ENCODE measurements at regions of chr7 and their contacts with region 1.

Region 1: DNA sequence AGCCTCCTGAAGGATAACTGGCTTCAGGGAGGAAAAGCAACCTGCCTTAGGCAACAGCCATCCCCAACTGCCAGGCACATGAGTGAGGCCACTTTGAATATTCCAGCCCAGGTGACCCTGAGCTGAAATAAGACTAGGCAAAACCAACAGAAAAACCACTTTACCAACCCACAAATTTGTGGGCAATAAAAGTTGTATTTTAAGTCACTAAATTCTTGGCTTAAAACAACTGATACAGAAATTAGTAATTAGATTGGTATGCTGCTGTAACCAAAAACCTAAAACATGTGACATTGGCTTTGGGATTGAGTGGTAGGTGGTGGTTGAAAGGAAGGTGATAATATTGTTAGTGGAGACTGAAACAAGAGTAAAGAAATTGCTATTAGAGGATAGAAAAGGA is 39.9 kb downstream of the ABCB4 start:
- DNase-seq: peak; percentile 13
- ATAC-seq: no peak
- H3K4me3 ChIP-seq: no peak overlapping the region
- H3K27ac ChIP-seq: no peak overlapping the region
- H3K4me1 ChIP-seq: peaks cover 2% of the 10 kb centered on the region
- H3K27me3 ChIP-seq: peaks cover 6% of the 10 kb centered on the region
- CTCF ChIP-seq: no peak
- POLR2A ChIP-seq: no peak
- RAD21 ChIP-seq: no peak

Region 2: GRCh38 chr7:87779806-87780205 is 344.3 kb after region 1 on chr7:
- CTCF ChIA-PET with region 1: no interaction called
- POLR2A ChIA-PET with region 1: no interaction called
- dilution Hi-C with region 1: no loop called
- in situ Hi-C with region 1: no loop called
- intact Hi-C with region 1: loop called (anchors 10 kb)
- DNase-seq: no peak
- ATAC-seq: no peak
- H3K4me3 ChIP-seq: no peak overlapping the region
- H3K27ac ChIP-seq: no peak overlapping the region
- H3K4me1 ChIP-seq: no peaks in the 10 kb centered on the region
- H3K27me3 ChIP-seq: no peaks in the 10 kb centered on the region
- CTCF ChIP-seq: no peak
- POLR2A ChIP-seq: no peak
- RAD21 ChIP-seq: no peak

Measured in IMR-90 (cell line).